ENCODE measurements at regions of chr4 and their contacts with region 1.

Region 1: GRCh38 chr4:108018040-108018883 is 28.6 kb downstream of the HADH start:
- DNase-seq: peak; percentile 90
- ATAC-seq: peak; percentile 68
- H3K4me3 Mint-ChIP-seq: no peak overlapping the region
- H3K27ac Mint-ChIP-seq: peak overlapping the region; percentile 58
- H3K4me1 Mint-ChIP-seq: peaks cover 33% of the 10 kb centered on the region
- H3K27me3 Mint-ChIP-seq: no peaks in the 10 kb centered on the region

Region 2: DNA sequence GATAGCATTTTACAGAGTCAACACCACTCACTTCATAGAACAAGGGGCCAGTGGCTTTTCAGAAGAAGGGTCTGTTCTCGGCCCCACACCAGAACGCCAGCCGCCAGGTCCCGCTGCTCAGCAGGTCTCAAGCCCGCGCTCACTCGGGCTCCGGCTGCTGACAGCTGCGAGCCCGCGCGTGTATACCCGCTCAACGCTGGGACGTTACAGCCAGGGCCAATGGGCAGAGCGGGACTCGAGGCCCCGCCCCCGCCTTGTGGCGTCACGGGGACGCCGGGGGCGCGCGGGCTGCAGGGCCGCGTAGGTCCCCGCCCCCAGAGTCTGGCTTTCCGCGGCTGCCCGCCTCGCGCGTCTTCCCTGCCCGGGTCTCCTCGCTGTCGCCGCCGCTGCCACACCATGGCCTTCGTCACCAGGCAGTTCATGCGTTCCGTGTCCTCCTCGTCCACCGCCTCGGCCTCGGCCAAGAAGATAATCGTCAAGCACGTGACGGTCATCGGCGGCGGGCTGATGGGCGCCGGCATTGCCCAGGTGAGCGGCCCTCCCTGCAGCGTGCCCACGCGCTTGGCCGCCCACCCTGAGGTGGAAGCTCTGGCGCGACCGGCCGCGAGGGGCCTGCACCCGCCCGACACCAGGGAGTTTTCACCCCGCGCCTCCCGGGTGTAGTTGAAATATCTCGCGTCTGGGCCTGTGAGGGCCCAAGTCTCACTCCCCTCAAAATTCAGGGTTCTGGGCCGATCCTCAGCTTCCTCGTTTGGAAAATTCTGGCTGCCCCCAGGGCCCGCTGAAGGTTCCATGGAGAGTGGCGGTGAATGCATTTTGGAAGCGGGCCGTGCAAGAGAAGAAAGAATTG is 28.5 kb before region 1 on chr4 and contains the start of gene HADH:
- CTCF ChIA-PET with region 1: interaction called, 14 read pairs
- POLR2A ChIA-PET with region 1: no interaction called
- DNase-seq: peak; percentile 95
- ATAC-seq: peak; percentile 98
- H3K4me3 Mint-ChIP-seq: peak within 1 kb of the TSS; percentile 98
- H3K27ac Mint-ChIP-seq: peak within 1 kb of the TSS; percentile 94
- H3K4me1 Mint-ChIP-seq: peaks cover 48% of the 10 kb centered on the region
- H3K27me3 Mint-ChIP-seq: no peaks in the 10 kb centered on the region
- total RNA-seq, gene HADH: 52.8 to 53.7 TPM

Region 3: DNA sequence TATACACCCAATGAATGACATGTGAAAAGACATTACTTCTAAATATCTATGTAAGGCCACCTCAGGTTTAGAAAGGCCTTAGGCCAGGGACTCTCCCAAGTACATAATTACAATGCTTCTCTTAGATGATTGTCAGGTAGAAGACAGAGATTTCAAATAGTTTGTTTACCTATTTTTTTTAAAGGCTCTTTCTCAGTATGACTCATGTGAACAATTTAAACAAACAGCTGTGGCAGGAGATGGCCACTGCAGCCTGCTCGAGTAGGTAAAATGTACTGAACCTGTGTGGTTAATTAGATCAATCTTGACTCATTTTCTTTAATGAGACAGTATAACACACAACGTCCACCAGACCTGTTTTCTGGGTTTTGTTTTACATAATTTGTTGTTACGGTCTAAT is 100.2 kb after region 1 on chr4:
- CTCF ChIA-PET with region 1: interaction called, 11 read pairs
- POLR2A ChIA-PET with region 1: interaction called, 3 read pairs
- DNase-seq: no peak
- ATAC-seq: peak; percentile 34
- H3K4me3 Mint-ChIP-seq: peak overlapping the region; percentile 61
- H3K27ac Mint-ChIP-seq: peak overlapping the region; percentile 84
- H3K4me1 Mint-ChIP-seq: peaks cover 86% of the 10 kb centered on the region
- H3K27me3 Mint-ChIP-seq: no peaks in the 10 kb centered on the region

Region 4: DNA sequence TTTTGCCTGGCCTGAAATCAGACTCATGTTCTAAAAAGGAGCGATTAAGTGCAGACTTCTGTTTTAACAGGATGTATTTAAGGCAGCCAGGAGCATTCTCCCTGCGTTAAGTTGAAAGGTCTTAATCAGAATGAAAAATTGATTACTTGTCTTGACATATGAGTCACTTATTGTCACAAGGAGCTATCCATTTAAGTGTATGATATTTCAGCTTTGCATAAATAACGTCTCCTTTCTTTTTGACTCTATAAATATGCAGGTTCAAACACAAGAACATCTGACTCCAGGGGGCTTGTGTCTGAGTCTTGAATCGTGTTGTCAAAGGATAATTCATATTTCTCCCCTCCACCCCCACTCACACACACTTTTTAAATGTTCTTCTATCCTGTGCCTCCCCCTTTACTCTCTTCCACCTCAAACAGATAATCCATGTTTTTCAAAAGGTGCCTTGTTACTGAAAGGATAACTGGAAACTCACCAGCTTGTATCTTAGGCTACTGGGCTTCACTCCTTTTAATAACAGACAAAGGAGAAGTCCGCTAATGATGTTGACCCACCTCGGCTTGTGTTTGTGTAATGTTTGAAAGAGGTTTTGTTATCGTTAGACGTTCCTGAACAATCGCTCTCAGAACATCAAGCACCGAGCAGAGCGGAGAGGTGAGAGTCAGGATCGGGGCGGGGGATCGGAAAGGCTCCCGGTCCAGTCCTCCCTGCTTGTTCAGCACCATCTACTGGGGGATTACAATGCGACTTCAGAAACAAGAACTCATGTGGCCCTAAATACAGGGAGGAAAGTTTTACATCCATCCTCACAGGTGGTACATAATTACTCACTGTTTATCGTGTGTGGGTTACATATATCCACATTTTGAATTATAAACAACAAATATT is 494.6 kb after region 1 on chr4:
- CTCF ChIA-PET with region 1: interaction called, 14 read pairs
- POLR2A ChIA-PET with region 1: no interaction called
- DNase-seq: peak; percentile 69
- ATAC-seq: peak; percentile 94
- H3K4me3 Mint-ChIP-seq: peak overlapping the region; percentile 59
- H3K27ac Mint-ChIP-seq: no peak overlapping the region
- H3K4me1 Mint-ChIP-seq: peaks cover 17% of the 10 kb centered on the region
- H3K27me3 Mint-ChIP-seq: peaks cover 6% of the 10 kb centered on the region

Region 5: GRCh38 chr4:108620101-108620932 is 602.1 kb after region 1 on chr4 and contains the start of gene RPL34:
- CTCF ChIA-PET with region 1: interaction called, 13 read pairs
- POLR2A ChIA-PET with region 1: no interaction called
- DNase-seq: peak; percentile 99
- ATAC-seq: peak; percentile 100
- H3K4me3 Mint-ChIP-seq: peak within 1 kb of the TSS; percentile 87
- H3K27ac Mint-ChIP-seq: peak within 1 kb of the TSS; percentile 89
- H3K4me1 Mint-ChIP-seq: peaks cover 46% of the 10 kb centered on the region
- H3K27me3 Mint-ChIP-seq: no peaks in the 10 kb centered on the region
- total RNA-seq, gene RPL34: 1,024 to 1,097 TPM

Measured in activated CD8-positive, alpha-beta T cell treated with anti-CD3 and anti-CD28 coated beads, Interleukin-2, amount 10 ng/mL, durations not matched to agents 7 days and 5 days (primary cell).